H1 (cell line): ENCODE measurements at regions of chr22 and their contacts with region 1.

Region 1: DNA sequence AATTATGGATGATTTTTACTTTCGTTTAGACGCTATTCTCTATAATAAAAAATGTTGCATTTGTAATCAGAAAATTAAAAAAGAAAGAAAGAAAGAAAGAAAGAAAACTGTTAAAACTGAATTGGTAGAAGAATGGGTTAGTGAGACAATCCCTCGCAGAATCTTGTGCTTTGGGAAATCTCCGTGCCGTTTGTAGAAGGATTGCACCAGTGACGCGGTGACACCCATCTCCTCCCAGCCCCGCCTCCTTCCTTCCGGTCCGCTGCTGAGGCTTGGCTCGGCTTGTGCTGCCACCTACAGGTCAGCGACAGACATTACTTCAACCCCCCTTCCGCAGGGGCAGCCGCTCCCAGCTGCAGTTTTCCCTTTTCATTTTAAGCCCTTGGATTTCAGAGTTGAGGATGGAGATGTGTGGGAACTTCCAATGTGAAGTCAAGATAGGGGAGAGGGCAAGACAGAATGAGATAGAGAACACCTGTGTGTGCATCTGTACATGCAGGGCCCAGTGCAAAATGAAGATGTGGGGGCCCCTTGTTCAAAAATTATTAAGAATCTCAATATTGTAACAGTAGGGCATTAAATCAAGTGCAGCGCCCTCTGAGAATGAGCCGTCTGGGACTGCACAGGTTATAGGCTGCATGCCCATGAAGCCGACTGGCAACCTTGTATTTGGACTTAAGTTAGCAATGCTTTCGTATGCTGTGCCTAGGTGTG is 41.1 kb downstream of the TST start:
- DNase-seq: peak; percentile 59 to 88
- H3K4me3 ChIP-seq: peak overlapping the region in 3 of 4 experiments; percentile 29 to 65 (median 33); a peak in 5 of 8 replicates
- H3K27ac ChIP-seq: no peak overlapping the region
- H3K4me1 ChIP-seq: no peaks in the 10 kb centered on the region; a peak in 1 of 7 replicates
- H3K27me3 ChIP-seq: no peaks in the 10 kb centered on the region; a peak in 2 of 7 replicates
- CTCF ChIP-seq: peak; percentile 92 to 93 (median 93)
- EP300 ChIP-seq: no peak; a peak in 1 of 3 replicates
- POLR2A ChIP-seq: no peak
- RAD21 ChIP-seq: peak; percentile 90

Region 2: GRCh38 chr22:36757668-36758211 is 220.4 kb before region 1 on chr22:
- CTCF ChIA-PET with region 1: interaction called, 14 read pairs
- POLR2A ChIA-PET with region 1: no interaction called
- DNase-seq: peak; percentile 63 to 92
- H3K4me3 ChIP-seq: no peak overlapping the region
- H3K27ac ChIP-seq: no peak overlapping the region
- H3K4me1 ChIP-seq: peaks cover 0 to 7% (median 0%) of the 10 kb centered on the region in 4 experiments; a peak in 2 of 7 replicates
- H3K27me3 ChIP-seq: peaks cover 0 to 3% (median 0%) of the 10 kb centered on the region in 4 experiments; a peak in 2 of 7 replicates
- CTCF ChIP-seq: peak; percentile 90 to 95 (median 95)
- EP300 ChIP-seq: no peak
- POLR2A ChIP-seq: no peak
- RAD21 ChIP-seq: peak; percentile 83 to 91

Region 3: GRCh38 chr22:36873680-36874537 is 104.2 kb before region 1 on chr22:
- CTCF ChIA-PET with region 1: interaction called, 18 read pairs
- POLR2A ChIA-PET with region 1: no interaction called
- DNase-seq: no peak
- H3K4me3 ChIP-seq: no peak overlapping the region
- H3K27ac ChIP-seq: no peak overlapping the region
- H3K4me1 ChIP-seq: no peaks in the 10 kb centered on the region; a peak in 1 of 7 replicates
- H3K27me3 ChIP-seq: no peaks in the 10 kb centered on the region; a peak in 1 of 7 replicates
- CTCF ChIP-seq: peak; percentile 62 to 76 (median 72)
- EP300 ChIP-seq: no peak
- POLR2A ChIP-seq: no peak
- RAD21 ChIP-seq: peak; percentile 65 to 82

Region 4: DNA sequence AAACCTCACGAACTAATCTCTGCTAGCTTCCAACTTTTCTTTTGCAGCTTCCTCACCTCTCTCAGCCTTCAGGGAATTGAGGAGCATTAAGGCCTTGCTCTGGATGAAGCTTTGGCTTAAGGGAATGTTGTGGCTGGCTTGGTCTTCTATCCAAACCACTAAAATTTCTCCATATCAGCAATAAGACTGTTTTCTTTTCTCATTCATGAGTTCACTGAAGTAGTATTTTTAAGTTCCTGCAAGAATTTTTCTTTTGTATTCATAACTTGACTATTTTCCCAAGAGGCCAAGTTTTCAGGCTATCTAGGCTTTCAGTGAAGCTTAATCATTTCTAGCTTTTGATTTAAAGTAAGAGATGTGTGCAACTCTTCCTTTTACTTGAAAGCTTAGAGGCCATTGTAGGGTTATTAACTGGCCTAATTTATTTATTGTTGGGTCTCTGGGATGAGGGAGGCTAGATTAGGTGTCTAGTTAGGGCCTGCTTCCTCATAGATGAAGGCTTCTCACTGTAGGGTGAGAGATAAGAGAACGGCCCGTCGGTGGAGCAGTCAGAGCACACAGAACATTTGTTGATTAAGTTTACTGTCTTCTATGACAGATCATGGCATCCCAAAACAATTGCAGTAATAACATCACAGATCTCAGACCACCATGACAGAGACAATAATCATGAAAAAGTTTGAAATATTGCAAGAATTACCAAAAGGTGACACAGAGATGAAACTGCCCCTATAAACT is 31.5 kb before region 1 on chr22:
- CTCF ChIA-PET with region 1: interaction called, 14 read pairs
- POLR2A ChIA-PET with region 1: no interaction called
- DNase-seq: no peak
- H3K4me3 ChIP-seq: no peak overlapping the region
- H3K27ac ChIP-seq: no peak overlapping the region
- H3K4me1 ChIP-seq: no peaks in the 10 kb centered on the region
- H3K27me3 ChIP-seq: no peaks in the 10 kb centered on the region; a peak in 1 of 7 replicates
- CTCF ChIP-seq: peak in 2 of 3 experiments; percentile 27 to 38; a peak in 3 of 4 replicates
- EP300 ChIP-seq: no peak
- POLR2A ChIP-seq: no peak
- RAD21 ChIP-seq: peak; percentile 30 to 40

Region 5: DNA sequence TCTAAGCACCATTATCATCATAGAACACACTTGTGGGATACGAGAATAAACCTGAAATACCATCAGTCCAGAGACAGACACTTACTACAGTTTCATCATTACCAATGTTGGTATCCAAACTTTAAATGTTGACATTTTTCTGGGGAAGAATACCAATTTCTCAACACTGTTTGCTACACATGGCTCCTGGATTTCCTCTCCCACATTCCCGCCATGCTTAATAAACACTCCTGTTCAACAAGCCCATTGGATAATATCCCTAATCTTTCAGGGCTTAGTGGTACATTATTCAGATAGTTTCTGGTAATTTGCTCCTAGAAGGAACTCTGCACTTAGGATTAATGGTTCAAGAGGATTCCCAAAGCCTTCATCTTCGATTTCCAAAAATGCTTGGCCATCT is 16.5 kb before region 1 on chr22:
- CTCF ChIA-PET with region 1: interaction called, 68 read pairs
- POLR2A ChIA-PET with region 1: interaction called, 4 read pairs
- DNase-seq: no peak
- H3K4me3 ChIP-seq: no peak overlapping the region
- H3K27ac ChIP-seq: no peak overlapping the region
- H3K4me1 ChIP-seq: 0 out of 7 replicates have a peak, but pooled peaks cover 0 to 3% (median 0%) of the 10 kb centered on the region in 4 experiments
- H3K27me3 ChIP-seq: no peaks in the 10 kb centered on the region
- CTCF ChIP-seq: no peak
- EP300 ChIP-seq: no peak
- POLR2A ChIP-seq: no peak
- RAD21 ChIP-seq: no peak

Region 6: DNA sequence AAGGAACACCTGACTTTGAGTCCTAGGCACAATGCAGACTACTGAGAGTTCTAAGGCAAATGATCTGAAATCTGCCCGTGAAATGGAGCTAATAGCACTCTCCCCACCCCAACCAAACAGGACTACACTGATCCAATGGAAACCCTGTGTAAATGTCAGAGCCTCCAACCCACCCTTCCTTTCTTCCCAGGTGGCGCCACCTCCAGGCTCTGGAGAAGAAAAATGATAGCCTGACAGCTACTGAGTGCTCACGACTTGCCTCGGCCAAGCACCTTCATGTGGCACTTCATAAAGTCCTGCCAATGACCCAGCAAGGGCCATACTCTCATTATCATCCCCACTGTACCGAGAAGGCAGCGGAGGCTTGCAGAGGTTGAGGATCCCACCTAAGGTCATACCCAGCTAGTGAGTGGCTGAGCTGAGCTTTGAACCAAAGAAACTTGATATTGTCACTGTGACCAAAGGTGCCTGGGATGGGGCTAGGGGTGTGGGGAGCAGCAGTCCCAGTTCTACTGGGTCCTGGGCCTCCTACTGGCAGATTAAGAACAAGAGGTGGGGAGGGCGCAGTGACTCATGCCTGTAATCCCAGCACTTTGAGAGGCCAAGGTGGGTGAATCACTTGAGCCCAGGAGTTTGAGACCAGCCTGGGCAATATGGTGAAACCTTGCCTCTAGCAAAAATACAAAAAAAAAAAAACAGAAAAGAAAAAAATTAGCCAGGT is 20.7 kb after region 1 on chr22:
- CTCF ChIA-PET with region 1: interaction called, 18 read pairs
- POLR2A ChIA-PET with region 1: no interaction called
- DNase-seq: no peak
- H3K4me3 ChIP-seq: no peak overlapping the region
- H3K27ac ChIP-seq: no peak overlapping the region
- H3K4me1 ChIP-seq: peaks cover 0 to 7% (median 2%) of the 10 kb centered on the region in 4 experiments; a peak in 6 of 7 replicates
- H3K27me3 ChIP-seq: 0 out of 7 replicates have a peak, but pooled peaks cover 0 to 3% (median 0%) of the 10 kb centered on the region in 4 experiments
- CTCF ChIP-seq: peak; percentile 47 to 57 (median 54)
- EP300 ChIP-seq: no peak
- POLR2A ChIP-seq: no peak
- RAD21 ChIP-seq: peak; percentile 34 to 48; a peak in 3 of 4 replicates